AG04450 (cell line): ENCODE measurements at regions of chr10 and their contacts with region 1.

Region 1: DNA sequence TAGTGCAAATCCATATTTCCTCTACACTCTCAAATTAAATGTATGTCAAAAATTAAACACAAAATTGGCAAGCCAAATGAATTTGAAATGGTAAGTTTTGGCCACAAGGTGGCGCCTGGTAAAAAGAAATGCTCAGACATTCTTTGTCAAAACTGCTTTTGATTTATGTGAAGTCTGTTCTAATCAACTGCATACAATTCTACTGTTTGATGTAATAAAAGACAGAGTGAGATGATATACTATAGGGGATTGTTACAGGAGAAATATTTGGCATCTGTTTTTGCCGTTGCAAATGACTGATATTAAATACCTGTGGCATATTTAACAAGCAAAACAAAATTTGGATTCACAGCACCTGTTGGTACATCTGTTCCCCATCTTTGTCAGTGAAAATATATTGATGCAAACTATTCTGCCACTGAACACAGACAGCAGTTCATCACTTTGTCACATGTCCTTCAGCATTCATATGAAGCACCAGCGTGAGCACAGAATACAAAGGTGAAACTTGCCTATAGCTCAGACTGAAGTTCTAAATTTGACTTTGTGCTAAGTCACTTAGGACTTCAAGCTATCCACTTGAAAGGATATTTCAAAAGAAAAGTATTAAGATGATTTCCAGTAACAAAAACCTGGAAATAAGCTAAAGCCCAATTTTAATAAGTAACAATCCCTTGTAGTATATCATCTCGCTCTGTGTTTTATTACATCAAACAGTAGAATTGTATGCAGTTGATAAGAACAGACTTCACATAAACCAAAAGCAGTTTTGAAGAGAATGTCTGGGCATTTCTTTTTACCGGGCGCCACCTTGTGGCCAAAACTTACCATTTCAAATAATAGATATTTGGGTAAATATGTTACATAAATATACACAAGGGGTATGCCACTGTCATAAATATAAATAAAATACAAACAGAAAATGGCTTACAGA is 10.2 kb upstream of the CH25H start:
- DNase-seq: peak; percentile 38
- H3K4me3 ChIP-seq: no peak overlapping the region
- H3K27ac ChIP-seq: no peak overlapping the region
- H3K27me3 ChIP-seq: no peaks in the 10 kb centered on the region
- CTCF ChIP-seq: peak; percentile 67

Region 2: GRCh38 chr10:88944813-88945212 is 272.5 kb before region 1 on chr10:
- CTCF ChIA-PET with region 1: interaction called, 12 read pairs
- POLR2A ChIA-PET with region 1: no interaction called
- DNase-seq: no peak
- H3K4me3 ChIP-seq: no peak overlapping the region
- H3K27ac ChIP-seq: no peak overlapping the region
- H3K27me3 ChIP-seq: no peaks in the 10 kb centered on the region
- CTCF ChIP-seq: no peak

Region 3: GRCh38 chr10:89007129-89007893 is 210.0 kb before region 1 on chr10:
- CTCF ChIA-PET with region 1: interaction called, 15 read pairs
- POLR2A ChIA-PET with region 1: no interaction called
- DNase-seq: no peak
- H3K4me3 ChIP-seq: no peak overlapping the region
- H3K27ac ChIP-seq: no peak overlapping the region
- H3K27me3 ChIP-seq: no peaks in the 10 kb centered on the region
- CTCF ChIP-seq: no peak

Region 4: GRCh38 chr10:89029785-89030437 is 187.4 kb before region 1 on chr10:
- CTCF ChIA-PET with region 1: interaction called, 147 read pairs
- POLR2A ChIA-PET with region 1: no interaction called
- DNase-seq: peak; percentile 59
- H3K4me3 ChIP-seq: no peak overlapping the region
- H3K27ac ChIP-seq: no peak overlapping the region
- H3K27me3 ChIP-seq: no peaks in the 10 kb centered on the region
- CTCF ChIP-seq: peak; percentile 85

Region 5: DNA sequence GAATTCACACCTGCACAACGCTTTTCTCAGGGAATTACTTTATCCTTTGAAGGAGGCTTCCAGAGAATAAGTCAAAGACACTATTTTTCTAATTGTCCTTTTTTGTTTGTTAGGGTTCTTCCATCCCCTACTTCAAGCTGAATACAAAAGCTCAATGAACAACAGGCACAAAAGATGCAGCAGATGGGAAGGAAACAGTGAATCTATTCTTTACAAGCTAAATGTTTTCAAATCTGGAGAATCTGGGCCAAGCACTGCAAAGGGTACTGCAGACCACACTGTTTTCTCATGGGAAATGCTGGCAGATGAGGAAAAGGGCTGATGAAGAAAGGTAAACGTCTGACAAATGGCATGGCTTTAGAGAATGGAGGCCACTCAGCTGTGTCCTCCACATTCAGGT is 15.7 kb after region 1 on chr10:
- CTCF ChIA-PET with region 1: interaction called, 19 read pairs
- POLR2A ChIA-PET with region 1: no interaction called
- DNase-seq: no peak
- H3K4me3 ChIP-seq: no peak overlapping the region
- H3K27ac ChIP-seq: no peak overlapping the region
- H3K27me3 ChIP-seq: no peaks in the 10 kb centered on the region
- CTCF ChIP-seq: no peak

Region 6: DNA sequence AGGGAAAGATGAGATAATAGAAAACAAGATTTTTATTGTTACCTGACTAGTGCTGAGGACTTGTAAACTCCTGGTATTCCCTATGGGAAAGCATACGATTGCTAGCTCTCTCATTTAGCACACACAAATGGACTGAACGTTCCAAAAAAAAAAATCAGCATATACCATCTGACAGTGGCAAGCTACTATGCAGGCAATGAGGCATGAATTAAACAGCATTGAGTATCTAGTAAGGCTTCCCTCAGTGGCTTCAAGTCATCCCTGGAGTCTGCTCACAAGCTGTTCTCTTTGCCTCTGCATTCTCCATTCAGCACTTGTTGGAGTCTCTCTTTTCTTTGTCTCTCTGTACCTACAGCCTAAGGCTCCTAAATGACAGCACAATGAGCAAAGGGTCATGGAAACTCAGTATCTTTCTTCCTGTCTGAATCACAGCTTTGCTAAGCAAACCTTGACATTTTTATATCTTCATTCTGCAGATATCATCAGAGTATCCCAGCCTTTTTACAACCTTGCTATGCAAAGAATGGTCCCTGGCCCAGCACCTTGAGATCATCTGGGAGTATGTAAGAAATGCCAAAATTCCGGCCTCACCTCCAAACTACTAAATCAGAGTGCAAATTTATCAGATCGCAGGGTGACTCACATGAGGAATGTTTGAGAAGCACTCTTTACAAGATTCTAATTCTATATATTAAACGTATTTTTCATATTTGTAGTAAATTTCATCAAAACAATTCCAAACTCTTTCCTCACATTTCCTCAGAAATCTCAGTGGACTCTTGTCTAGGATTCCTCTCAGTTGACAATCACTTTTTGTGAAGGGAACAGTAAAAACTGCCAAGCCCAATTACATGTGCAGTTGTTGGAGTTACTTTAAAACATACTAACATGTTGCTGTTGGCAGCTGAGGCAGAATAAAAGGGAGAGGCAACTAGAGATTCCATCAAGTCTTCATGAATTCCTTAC is 45.0 kb after region 1 on chr10:
- CTCF ChIA-PET with region 1: no interaction called
- POLR2A ChIA-PET with region 1: no interaction called
- DNase-seq: no peak
- H3K4me3 ChIP-seq: no peak overlapping the region
- H3K27ac ChIP-seq: no peak overlapping the region
- H3K27me3 ChIP-seq: no peaks in the 10 kb centered on the region
- CTCF ChIP-seq: no peak

Region 7: DNA sequence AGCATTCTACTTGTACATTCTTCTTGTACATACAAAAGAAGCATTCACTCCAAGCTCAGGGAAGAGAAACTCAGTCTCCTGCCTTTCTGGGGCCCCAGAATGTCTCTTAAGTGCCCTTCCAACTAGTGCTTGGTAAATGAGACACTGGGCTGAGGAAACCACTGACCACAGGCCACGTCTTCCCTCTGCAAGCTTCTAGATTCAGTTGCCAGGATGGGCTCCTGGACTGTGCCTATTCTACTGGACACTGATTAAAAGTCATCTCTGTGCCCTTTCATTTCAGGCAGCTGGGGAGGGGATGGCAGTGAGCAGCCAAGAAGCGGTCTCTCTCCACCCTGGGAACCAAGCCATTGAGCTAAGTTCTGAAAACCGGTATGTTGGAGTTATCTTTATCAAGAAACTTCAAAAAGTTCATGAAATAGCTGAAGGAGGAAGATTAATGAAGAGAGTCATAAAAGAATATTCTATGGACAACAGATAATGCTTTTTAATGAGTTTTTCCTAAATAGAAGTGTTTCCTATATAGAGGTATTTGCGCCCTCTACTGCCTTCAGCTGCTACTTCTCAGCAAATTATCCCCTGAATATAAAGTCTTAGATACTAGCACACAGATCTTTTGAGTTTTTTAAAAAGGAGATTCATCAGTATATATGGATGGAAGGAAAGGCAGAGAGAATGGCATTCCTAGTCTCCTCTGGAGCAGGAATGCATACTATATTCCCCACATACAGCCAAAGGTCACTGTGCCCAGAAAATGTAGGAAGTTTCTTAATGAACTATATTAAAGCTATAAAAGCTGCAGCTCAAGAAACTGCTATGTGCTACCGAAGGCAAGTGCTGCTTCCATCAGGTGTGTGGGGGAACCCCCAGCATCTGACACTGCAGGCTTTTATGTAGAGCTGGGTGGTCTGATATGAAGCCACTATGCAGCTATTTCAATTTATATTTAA is 152.1 kb after region 1 on chr10:
- CTCF ChIA-PET with region 1: interaction called, 31 read pairs
- POLR2A ChIA-PET with region 1: no interaction called
- DNase-seq: no peak
- H3K4me3 ChIP-seq: no peak overlapping the region
- H3K27ac ChIP-seq: no peak overlapping the region
- H3K27me3 ChIP-seq: no peaks in the 10 kb centered on the region
- CTCF ChIP-seq: peak; percentile 69

Region 8: DNA sequence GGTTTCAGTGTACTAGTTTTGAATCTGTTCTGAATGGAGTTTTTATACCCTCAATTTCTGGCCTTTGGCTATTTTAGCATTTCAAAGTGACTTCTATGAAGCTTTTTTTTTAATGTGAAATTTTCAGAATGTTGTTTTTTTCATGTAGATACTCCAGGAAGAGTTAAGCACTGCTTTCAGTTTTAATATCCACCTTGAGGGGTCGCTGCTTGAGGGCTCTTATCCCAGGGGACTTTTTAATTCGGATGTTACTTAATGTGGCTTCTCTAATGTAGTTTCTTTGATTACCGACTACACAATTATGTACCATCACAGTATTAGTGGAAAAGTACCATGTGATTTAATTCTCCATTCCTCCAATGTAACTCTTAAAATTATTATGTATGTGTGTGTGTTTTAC is 202.2 kb after region 1 on chr10:
- CTCF ChIA-PET with region 1: interaction called, 10 read pairs
- POLR2A ChIA-PET with region 1: no interaction called
- DNase-seq: no peak
- H3K4me3 ChIP-seq: no peak overlapping the region
- H3K27ac ChIP-seq: no peak overlapping the region
- H3K27me3 ChIP-seq: no peaks in the 10 kb centered on the region
- CTCF ChIP-seq: peak; percentile 63